Keratinocyte (primary cell): ENCODE measurements at regions of chr1 and their contacts with region 1.

Region 1: GRCh38 chr1:205335643-205336091 is 14.1 kb upstream of the NUAK2 start:
- DNase-seq: no peak
- H3K4me3 ChIP-seq: no peak overlapping the region
- H3K27ac ChIP-seq: no peak overlapping the region
- H3K4me1 ChIP-seq: no peaks in the 10 kb centered on the region
- H3K27me3 ChIP-seq: peaks cover 13% of the 10 kb centered on the region
- CTCF ChIP-seq: peak; percentile 95 to 99 (median 99)

Region 2: DNA sequence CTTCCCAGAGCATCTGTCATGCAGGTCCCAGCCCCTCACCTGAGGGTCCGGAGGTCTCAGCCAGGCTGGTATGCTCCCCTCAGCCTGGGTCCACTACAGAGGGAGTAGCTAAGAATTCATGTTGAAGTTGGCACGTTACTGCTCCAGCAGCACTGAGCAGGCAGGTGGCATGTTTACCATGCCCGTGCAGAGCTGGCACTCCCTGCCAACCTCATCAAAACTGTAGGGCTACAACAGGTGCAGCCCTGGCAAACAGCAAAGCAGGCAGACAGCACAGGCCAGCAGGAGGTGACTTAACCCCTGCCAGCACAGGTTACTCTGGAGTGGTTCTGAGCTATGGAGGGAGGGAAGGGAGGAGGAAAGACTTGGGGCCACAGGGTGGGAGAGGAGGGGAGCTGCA is 60.5 kb before region 1 on chr1:
- dilution Hi-C with region 1: loop called (anchors 5 kb)
- DNase-seq: no peak
- H3K4me3 ChIP-seq: no peak overlapping the region
- H3K27ac ChIP-seq: no peak overlapping the region
- H3K4me1 ChIP-seq: peaks cover 36% of the 10 kb centered on the region
- H3K27me3 ChIP-seq: no peaks in the 10 kb centered on the region
- CTCF ChIP-seq: no peak

Region 3: DNA sequence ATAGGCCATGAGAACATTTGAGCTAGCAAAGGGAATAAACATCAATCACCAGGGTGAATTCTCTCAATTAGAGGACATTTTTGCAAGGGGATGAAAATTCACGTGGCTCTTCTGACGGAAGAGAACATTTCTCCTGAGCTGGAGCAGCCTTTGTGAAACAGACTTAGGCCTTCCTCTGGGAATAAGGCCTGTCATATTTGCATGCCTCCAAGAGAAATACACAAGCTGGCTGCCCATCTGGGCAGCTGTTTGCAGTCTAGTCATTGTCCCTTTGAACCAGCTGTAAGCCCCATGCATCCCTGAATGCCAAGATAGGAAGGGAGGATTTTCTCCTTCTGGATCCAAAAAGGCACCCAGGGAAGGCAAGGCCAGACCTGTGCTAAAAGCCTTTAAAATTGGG is 80.7 kb after region 1 on chr1:
- dilution Hi-C with region 1: no loop called
- DNase-seq: no peak
- H3K4me3 ChIP-seq: no peak overlapping the region
- H3K27ac ChIP-seq: no peak overlapping the region
- H3K4me1 ChIP-seq: no peaks in the 10 kb centered on the region
- H3K27me3 ChIP-seq: peaks cover 8% of the 10 kb centered on the region
- CTCF ChIP-seq: no peak